GM12878 (cell line): ENCODE measurements at regions of chr7 and their contacts with region 1.

Region 1: GRCh38 chr7:37973915-37974314 is 53.5 kb downstream of the EPDR1 start:
- DNase-seq: no peak
- ATAC-seq: peak; percentile 63
- H3K4me3 ChIP-seq: no peak overlapping the region
- H3K27ac ChIP-seq: no peak overlapping the region
- H3K4me1 ChIP-seq: no peaks in the 10 kb centered on the region
- H3K27me3 ChIP-seq: no peaks in the 10 kb centered on the region
- CTCF ChIP-seq: no peak
- EP300 ChIP-seq: no peak
- POLR2A ChIP-seq: no peak
- RAD21 ChIP-seq: no peak

Region 2: DNA sequence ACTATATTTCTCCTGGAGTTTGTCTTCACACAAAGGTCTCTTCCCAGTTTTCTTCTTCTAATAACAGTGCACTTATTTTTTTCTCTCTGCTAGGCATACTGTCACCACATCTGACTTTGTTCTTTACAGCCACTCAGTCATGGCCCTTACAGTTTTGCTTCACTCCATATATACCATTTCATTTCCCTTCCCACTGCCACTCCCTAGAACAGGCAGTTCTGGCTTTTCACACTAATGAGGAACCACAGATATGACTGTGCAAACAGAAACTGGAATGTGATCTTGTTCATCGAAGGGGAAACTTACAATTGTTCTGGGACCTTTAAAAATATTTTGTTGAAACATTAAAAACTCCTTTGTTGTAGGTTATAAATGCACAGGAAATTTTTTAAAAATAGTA is 13.8 kb after region 1 on chr7:
- CTCF ChIA-PET with region 1: interaction called, 4 read pairs
- POLR2A ChIA-PET with region 1: no interaction called
- RAD21 ChIA-PET with region 1: no interaction called
- SMC1A ChIA-PET with region 1: interaction called, 10 read pairs
- in situ Hi-C with region 1: no loop called
- intact Hi-C with region 1: no loop called
- DNase-seq: no peak
- ATAC-seq: peak; percentile 36
- H3K4me3 ChIP-seq: no peak overlapping the region
- H3K27ac ChIP-seq: no peak overlapping the region
- H3K4me1 ChIP-seq: 0 out of 2 replicates have a peak, but pooled peaks cover under 1% of the 10 kb centered on the region
- H3K27me3 ChIP-seq: no peaks in the 10 kb centered on the region
- CTCF ChIP-seq: no peak
- EP300 ChIP-seq: no peak
- POLR2A ChIP-seq: no peak
- RAD21 ChIP-seq: no peak